ENCODE measurements at regions of chr5 and their contacts with region 1.

Region 1: GRCh38 chr5:132007399-132008165 is 3.9 kb downstream of the ACSL6 start:
- DNase-seq: peak; percentile 62 to 71 (median 66)
- H3K4me3 ChIP-seq: no peak overlapping the region
- H3K4me3 Mint-ChIP-seq: peak overlapping the region in 1 of 8 donors; percentile 53
- H3K27ac ChIP-seq: no peak overlapping the region
- H3K27ac Mint-ChIP-seq: peak overlapping the region in 5 of 7 donors; percentile 6 to 83 (median 32)
- H3K4me1 ChIP-seq: peaks cover 32% of the 10 kb centered on the region
- H3K4me1 Mint-ChIP-seq: peaks cover 21 to 53% (median 37%) of the 10 kb centered on the region in 4 donors
- H3K27me3 ChIP-seq: no peaks in the 10 kb centered on the region
- H3K27me3 Mint-ChIP-seq: peaks cover 0 to 4% of the 10 kb centered on the region in 2 donors

Region 2: GRCh38 chr5:131514316-131515283 is 493.0 kb before region 1 on chr5:
- CTCF ChIA-PET with region 1: interaction called, 6 read pairs
- POLR2A ChIA-PET with region 1: no interaction called
- intact Hi-C with region 1: loop called (anchors 1 kb)
- DNase-seq: peak; percentile 67 to 79 (median 72)
- H3K4me3 ChIP-seq: peak overlapping the region; percentile 7 to 37
- H3K4me3 Mint-ChIP-seq: peak overlapping the region; percentile 79 to 92 (median 88)
- H3K27ac ChIP-seq: peak overlapping the region; percentile 61
- H3K27ac Mint-ChIP-seq: peak overlapping the region; percentile 81 to 98 (median 93)
- H3K4me1 ChIP-seq: peaks cover 60% of the 10 kb centered on the region
- H3K4me1 Mint-ChIP-seq: peaks cover 43 to 72% (median 53%) of the 10 kb centered on the region in 4 donors
- H3K27me3 ChIP-seq: no peaks in the 10 kb centered on the region
- H3K27me3 Mint-ChIP-seq: no peaks in the 10 kb centered on the region

Region 3: DNA sequence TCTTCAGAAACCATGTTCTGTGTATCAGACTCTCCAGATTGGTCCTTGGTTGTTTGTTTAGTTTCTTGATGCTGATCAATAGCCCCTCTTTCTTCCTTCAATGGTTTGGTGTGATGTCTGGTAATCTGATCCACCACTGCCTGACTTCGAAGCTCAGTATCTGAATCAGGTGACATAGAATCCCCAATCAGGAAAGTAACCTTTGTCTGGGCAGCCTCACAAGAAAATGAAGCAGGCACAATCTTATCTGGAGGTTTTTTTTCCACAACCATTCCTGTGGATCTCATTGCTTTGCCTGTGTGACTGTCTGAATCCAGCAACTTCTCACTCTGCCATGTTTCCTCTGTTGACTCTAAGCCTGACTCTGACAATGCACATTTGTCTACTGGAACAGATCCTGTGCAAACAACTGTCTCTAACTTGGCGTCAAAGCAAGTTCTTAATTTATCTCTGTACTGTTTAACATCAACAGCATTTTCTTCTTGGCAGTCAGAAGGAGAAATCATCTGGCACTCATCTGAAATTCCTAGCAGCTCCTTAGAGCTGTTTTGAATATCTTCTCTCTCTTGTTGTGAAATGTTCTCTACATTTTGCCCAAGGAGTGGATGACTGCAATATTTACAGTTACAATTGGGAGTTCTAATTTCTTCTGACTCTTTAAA is 335.5 kb before region 1 on chr5:
- CTCF ChIA-PET with region 1: no interaction called
- POLR2A ChIA-PET with region 1: no interaction called
- intact Hi-C with region 1: loop called (anchors 10 kb)
- DNase-seq: no peak
- H3K4me3 ChIP-seq: no peak overlapping the region
- H3K4me3 Mint-ChIP-seq: peak overlapping the region in 1 of 8 donors; percentile 57
- H3K27ac ChIP-seq: no peak overlapping the region
- H3K27ac Mint-ChIP-seq: peak overlapping the region in 6 of 7 donors; percentile 19 to 85 (median 35)
- H3K4me1 ChIP-seq: no peaks in the 10 kb centered on the region
- H3K4me1 Mint-ChIP-seq: peaks cover 0 to 7% (median 4%) of the 10 kb centered on the region in 4 donors
- H3K27me3 ChIP-seq: no peaks in the 10 kb centered on the region
- H3K27me3 Mint-ChIP-seq: no peaks in the 10 kb centered on the region

Region 4: DNA sequence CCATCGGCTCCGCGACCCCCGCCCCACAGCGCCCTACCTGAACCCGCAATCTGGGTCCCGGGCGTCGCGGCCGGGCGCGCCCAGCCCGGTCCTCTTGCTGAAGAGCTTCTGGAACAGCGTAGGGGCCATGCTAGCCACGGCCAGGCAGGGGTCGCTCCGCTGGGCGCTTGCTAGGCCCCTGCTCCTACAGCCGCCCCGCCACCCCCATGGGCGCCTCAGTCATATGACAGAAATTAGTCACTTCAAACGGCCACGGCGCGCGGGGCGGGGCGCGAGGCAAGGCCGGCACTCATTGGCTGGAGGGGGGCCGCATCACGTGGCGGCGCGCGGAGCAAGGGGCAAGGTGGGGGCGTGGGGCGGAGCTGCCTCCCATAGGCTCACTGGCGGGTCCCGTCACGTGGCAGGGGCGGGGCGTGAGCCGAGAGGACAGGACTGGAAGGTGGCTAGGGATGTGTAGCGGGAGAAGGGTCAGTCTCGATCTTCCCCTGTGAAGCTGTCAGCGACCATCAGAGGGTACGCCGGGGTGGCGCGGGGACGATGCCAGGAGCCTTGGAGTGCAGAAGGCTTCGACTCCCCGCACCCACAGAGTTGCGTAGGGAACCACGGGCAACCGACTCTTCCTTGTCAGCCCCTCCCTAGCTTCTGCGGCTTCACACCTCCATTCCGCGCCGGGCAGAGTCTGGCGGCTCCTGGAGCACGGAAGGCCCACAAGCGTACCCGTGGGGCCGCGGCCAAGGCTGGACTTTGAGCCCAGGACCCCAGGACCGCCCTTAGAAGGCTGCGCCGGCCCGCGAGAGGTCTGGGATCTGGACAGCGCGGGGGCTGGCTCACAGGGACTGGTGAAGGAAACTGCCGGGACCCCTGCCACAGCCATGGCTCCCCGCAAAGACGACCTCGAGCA is 210.5 kb before region 1 on chr5 and contains the start of gene FNIP1:
- CTCF ChIA-PET with region 1: interaction called, 13 read pairs
- POLR2A ChIA-PET with region 1: interaction called, 16 read pairs
- intact Hi-C with region 1: loop called (anchors 5 kb)
- DNase-seq: peak; percentile 96 to 98 (median 97)
- H3K4me3 ChIP-seq: peak within 1 kb of the TSS; percentile 76 to 90
- H3K4me3 Mint-ChIP-seq: peak within 1 kb of the TSS; percentile 92 to 97 (median 96)
- H3K27ac ChIP-seq: peak within 1 kb of the TSS; percentile 96
- H3K27ac Mint-ChIP-seq: peak within 1 kb of the TSS; percentile 94 to 99 (median 98)
- H3K4me1 ChIP-seq: peaks cover 45% of the 10 kb centered on the region
- H3K4me1 Mint-ChIP-seq: peaks cover 19 to 43% (median 24%) of the 10 kb centered on the region in 4 donors
- H3K27me3 ChIP-seq: no peaks in the 10 kb centered on the region
- H3K27me3 Mint-ChIP-seq: no peaks in the 10 kb centered on the region
- total RNA-seq, gene FNIP1: 34.9 to 35.9 TPM

Region 5: DNA sequence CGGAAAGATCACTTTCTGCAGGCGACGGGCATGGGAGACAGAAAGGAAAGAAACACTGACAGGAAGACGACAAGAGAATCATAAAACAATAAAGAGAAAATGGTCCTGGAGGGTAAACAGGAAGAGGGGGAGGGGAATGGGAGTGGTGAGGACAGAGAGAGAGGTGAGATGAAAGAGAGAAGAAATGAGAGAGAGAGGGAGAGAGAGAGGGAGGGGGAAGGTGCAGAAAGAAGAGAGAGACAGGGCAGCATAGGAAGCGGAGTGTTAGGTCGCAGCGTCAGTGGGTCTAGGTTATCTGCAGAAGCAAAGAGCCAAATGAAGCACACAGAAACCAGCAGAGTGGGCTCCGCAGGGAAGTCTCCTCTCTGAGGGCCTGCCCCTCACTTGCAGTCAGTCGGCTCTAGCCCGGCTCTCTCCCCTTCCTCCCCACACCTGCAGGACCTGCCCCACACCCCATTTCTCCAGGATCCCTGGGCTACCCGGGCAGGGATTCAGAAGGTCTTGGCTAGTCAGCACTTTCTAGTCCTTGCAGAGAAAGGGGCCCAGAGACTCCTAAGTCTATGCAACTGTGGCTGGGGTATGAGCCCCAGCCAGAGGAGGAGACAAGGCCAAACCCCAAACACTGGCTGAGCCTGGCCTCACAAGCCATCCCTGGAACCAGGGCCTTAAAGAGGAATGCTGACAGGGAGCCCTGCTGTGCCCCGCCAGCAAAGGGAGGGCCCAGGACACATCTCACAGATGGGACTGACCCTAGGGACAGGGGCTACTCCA is 32.4 kb before region 1 on chr5:
- CTCF ChIA-PET with region 1: interaction called, 8 read pairs
- POLR2A ChIA-PET with region 1: interaction called, 4 read pairs
- intact Hi-C with region 1: loop called (anchors 2 kb)
- DNase-seq: peak; percentile 41 to 55 (median 48)
- H3K4me3 ChIP-seq: peak overlapping the region; percentile 48 to 53
- H3K4me3 Mint-ChIP-seq: peak overlapping the region; percentile 85 to 96 (median 90)
- H3K27ac ChIP-seq: peak overlapping the region; percentile 61
- H3K27ac Mint-ChIP-seq: peak overlapping the region; percentile 87 to 98 (median 96)
- H3K4me1 ChIP-seq: peaks cover 55% of the 10 kb centered on the region
- H3K4me1 Mint-ChIP-seq: peaks cover 44 to 76% (median 63%) of the 10 kb centered on the region in 4 donors
- H3K27me3 ChIP-seq: no peaks in the 10 kb centered on the region
- H3K27me3 Mint-ChIP-seq: no peaks in the 10 kb centered on the region

Region 6: DNA sequence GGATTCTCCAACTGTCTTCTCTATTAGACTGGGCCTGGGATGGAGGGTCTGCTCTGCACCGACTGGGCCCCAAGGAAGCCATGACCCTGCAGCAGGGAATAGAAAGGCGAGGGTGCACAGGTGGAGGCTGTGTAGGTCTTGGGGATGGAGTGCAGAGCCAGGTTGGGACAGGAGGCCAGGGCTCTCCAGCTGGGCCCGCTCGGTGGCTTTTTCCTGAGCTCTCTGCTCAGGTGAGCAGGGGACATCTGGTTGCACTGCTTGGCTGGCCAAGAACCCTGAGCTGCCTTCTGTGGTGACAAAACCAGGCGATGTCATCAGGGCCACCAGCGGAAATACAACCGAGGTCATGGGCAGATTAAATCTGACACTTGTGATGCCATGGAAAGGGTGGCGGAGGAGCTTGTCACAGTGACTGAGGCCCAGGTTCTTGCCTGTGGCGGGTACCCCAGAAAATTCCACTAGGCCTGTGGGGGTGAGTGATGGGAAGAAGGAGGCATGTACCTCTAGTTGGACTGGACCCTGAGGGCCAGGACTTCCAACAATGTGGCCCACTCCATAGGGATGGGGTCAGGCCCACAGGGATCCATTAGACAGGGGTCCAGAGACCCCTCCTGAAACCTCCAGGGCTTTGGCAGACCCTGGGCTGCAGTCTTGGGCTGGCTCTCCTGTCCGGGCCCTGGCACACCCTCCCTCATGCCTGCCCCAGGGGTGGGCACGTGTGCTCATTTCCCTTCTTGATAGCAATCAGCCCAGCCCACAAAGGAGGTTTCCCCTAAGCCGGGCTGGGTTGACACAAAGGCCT is 48.4 kb after region 1 on chr5:
- CTCF ChIA-PET with region 1: interaction called, 71 read pairs
- POLR2A ChIA-PET with region 1: no interaction called
- intact Hi-C with region 1: no loop called
- DNase-seq: peak; percentile 72 to 92 (median 77)
- H3K4me3 ChIP-seq: no peak overlapping the region
- H3K4me3 Mint-ChIP-seq: peak overlapping the region in 7 of 8 donors; percentile 3 to 85 (median 49)
- H3K27ac ChIP-seq: peak overlapping the region; percentile 67
- H3K27ac Mint-ChIP-seq: peak overlapping the region; percentile 75 to 99 (median 95)
- H3K4me1 ChIP-seq: peaks cover 60% of the 10 kb centered on the region
- H3K4me1 Mint-ChIP-seq: peaks cover 32 to 75% (median 51%) of the 10 kb centered on the region in 4 donors
- H3K27me3 ChIP-seq: no peaks in the 10 kb centered on the region
- H3K27me3 Mint-ChIP-seq: no peaks in the 10 kb centered on the region

Region 7: DNA sequence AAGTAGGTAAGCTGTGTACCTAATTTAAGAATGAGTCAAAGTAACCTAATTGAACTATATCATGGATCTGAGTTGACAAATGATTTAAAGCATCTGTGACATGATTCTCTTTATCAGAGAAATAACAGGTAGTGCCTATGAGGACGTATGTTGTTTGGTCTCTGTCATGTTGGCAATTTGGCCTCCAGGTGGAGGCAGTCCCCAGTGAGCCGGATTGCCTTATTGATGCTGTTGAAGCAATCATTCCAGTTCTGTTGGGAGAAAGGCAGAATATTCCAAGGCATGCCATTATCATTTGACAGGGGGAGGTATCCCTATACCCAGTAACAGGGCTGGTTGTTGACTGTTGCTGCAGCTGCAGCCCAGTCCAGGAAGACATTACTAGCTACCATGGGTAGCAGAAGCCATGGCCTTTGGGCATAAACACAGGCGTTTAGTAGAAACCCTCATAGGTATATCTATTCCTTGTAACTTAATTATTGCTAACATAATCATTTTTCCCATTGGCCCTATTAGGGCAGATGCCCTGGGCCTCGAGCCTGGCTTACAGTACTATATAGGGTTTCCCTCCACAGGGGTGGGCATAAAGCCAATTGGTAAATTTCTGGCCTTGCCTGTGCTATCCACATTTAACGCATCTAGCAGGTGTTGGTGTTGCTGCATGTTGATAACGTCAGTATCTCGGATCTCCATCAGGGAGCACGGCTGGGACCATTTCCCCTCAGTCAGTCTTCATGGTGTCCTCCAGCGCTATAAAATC is 274.5 kb after region 1 on chr5:
- CTCF ChIA-PET with region 1: no interaction called
- POLR2A ChIA-PET with region 1: no interaction called
- intact Hi-C with region 1: no loop called
- DNase-seq: no peak
- H3K4me3 ChIP-seq: no peak overlapping the region
- H3K4me3 Mint-ChIP-seq: no peak overlapping the region
- H3K27ac ChIP-seq: no peak overlapping the region
- H3K27ac Mint-ChIP-seq: no peak overlapping the region
- H3K4me1 ChIP-seq: peaks cover 5% of the 10 kb centered on the region
- H3K4me1 Mint-ChIP-seq: no peaks in the 10 kb centered on the region
- H3K27me3 ChIP-seq: no peaks in the 10 kb centered on the region
- H3K27me3 Mint-ChIP-seq: no peaks in the 10 kb centered on the region

Measured in CD4-positive, alpha-beta memory T cell (primary cell).